Heart right ventricle (tissue), 16 donors: ENCODE measurements at regions of chrX and their contacts with region 1.

Region 1: DNA sequence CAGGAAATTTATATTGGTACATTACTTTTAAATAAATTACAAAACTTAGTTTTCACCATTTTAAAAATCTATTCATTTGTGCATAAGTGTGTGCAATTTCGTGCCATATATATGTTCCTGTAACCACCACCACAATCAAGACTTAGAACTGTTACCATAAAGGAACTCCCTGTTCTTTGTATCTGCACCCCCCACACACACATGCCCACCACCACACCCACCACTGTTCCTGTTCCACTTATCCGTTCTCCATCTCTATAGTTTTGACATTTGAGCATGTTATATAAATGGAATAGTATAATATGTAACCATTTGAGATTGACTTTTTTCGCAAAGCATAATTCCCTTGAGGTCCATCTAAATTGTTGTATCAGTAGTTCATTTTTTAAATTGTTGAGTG is 73.7 kb downstream of the TAF1 start:
- DNase-seq: no peak
- ATAC-seq: no peak
- H3K4me3 ChIP-seq: no peak overlapping the region
- H3K27ac ChIP-seq: no peak overlapping the region
- H3K4me1 ChIP-seq: no peaks in the 10 kb centered on the region
- H3K27me3 ChIP-seq: no peaks in the 10 kb centered on the region
- CTCF ChIP-seq: no peak

Region 2: GRCh38 chrX:71081330-71082148 is 358.4 kb before region 1 on chrX:
- intact Hi-C with region 1: loop called in 1 of 10 experiments (anchors 10 kb)
- DNase-seq: no peak
- ATAC-seq: no peak
- H3K4me3 ChIP-seq: no peak overlapping the region
- H3K27ac ChIP-seq: no peak overlapping the region
- H3K4me1 ChIP-seq: no peaks in the 10 kb centered on the region
- H3K27me3 ChIP-seq: peaks cover 0 to 11% (median 0%) of the 10 kb centered on the region in 7 donors
- CTCF ChIP-seq: no peak

Region 3: DNA sequence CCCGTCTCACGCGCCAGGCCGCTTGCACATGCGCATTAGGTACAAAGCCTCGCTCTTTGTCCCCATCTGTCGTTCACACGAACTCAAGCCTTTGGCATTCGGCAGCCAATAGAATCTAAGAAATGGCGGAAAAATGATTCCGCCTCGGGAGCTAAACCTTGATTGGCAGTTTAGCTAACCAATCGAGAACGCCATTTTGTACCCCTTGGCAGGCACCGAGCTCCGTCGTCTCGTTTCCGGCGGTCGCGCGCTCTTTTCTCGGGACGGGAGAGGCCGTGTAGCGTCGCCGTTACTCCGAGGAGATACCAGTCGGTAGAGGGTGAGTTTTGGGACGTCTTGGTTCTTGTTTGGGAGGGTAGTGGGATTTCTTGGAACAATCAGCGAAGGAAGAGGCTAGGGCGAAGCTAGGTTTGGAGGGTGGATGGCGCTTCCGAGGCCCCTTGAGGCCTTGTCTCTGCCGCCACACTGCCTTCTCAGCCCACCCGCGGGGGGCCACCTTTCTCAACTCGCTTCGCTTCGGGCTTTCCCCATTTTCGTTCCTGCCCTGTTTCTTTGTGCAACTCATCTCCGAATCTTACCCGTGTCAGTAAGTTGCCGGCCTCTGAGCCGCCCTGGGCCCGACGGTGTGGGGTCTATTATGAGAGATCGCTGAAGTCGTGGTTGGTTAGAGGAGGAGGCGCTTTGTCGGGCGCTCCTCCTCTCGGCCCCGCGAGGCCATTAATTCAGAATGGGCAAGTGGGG is 156.3 kb before region 1 on chrX and contains the start of gene NONO:
- intact Hi-C with region 1: no loop called
- DNase-seq: peak; percentile 74 to 95
- ATAC-seq: peak; percentile 91 to 98 (median 96)
- H3K4me3 ChIP-seq: peak within 1 kb of the TSS; percentile 41 to 81 (median 72)
- H3K27ac ChIP-seq: peak within 1 kb of the TSS; percentile 76 to 96 (median 90)
- H3K4me1 ChIP-seq: peaks cover 0 to 37% (median 28%) of the 10 kb centered on the region in 9 donors
- H3K27me3 ChIP-seq: no peaks in the 10 kb centered on the region
- CTCF ChIP-seq: peak in 5 of 9 donors; percentile 13 to 47 (median 24)
- total RNA-seq, gene NONO: 99.3 to 145 (median 114) TPM

Region 4: DNA sequence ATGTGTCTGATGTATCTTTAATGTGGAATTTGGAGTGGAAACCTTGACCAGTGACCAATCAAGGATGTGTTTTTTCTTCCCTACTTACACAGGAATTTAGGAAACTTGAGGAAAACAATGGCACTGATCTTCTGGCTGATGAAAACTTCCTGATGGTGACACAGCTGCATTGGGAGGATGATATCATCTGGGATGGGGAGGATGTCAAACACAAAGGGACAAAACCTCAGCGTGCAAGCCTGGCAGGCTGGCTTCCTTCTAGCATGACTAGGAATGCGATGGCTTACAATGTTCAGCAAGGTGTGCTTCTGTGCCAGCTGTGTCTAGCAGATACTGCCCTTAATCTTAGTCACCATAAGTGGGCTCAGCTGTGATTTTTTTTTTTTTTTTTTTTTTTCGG is 61.2 kb before region 1 on chrX:
- intact Hi-C with region 1: loop called in 1 of 10 experiments (anchors 10 kb)
- DNase-seq: no peak
- ATAC-seq: peak in 3 of 8 donors; percentile 45 to 63 (median 52)
- H3K4me3 ChIP-seq: no peak overlapping the region
- H3K27ac ChIP-seq: peak overlapping the region in 1 of 10 donors; percentile 31
- H3K4me1 ChIP-seq: no peaks in the 10 kb centered on the region
- H3K27me3 ChIP-seq: no peaks in the 10 kb centered on the region
- CTCF ChIP-seq: no peak

Region 5: DNA sequence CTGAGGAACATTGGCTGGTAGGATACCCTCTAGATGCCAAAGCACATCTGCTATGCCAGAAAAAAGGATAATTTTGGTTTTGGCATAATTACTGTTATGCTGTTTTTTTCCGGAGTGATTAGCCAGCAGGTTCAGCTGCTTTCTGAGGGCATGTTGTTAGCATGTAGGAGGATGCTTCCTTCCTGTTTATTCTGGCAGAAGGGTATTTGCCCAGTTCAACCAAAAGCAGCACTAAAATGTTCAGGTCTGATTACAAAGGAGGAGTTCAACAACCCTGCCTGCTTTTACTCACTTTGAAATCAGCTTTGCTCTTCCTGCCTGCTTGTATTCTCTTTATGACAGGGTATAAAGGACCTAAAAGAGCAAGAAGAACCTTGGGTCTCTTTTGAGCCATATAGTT is 777.1 kb after region 1 on chrX:
- intact Hi-C with region 1: no loop called
- DNase-seq: no peak
- ATAC-seq: no peak
- H3K4me3 ChIP-seq: no peak overlapping the region
- H3K27ac ChIP-seq: no peak overlapping the region
- H3K4me1 ChIP-seq: no peaks in the 10 kb centered on the region
- H3K27me3 ChIP-seq: no peaks in the 10 kb centered on the region
- CTCF ChIP-seq: no peak